CD14-positive monocyte (primary cell): ENCODE measurements at regions of chr15 and their contacts with region 1.

Region 1: DNA sequence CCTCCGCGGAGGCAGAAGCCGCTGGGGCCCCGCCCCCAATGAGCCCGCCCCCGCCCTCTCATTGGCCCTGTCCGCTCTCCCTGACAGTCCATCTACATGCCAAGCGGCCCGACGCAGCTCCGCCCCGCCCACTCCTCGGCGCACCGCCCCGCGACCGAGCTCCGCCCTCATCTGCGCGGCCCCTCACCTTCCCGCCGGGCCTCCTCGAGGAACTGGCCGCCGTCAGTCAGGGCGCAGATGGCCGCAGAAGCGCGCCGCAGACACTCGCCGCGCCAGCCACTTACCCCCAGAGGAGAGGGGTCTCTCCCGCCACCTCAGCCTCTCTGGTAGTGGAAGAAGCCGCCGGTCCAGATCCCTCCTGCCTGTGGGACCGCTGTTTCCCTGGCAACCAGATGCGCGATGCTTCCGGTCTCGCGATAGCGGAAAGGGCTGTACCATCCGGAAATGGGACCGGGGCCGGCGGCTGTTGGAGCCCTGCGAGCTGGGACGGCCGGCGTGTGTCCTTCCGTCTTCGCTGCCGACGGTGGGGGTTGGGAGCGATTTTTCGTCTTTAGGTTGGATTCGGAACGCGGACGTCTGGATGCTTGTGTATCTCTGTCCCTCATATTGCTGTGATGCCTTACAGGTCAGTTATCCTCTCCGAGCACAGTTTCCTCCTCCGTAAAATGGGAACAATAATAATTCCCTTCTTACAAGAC is at the start of gene FSIP1:
- DNase-seq: peak; percentile 94 to 95 (median 95)
- H3K4me3 ChIP-seq: peak within 1 kb of the TSS; percentile 81 to 91 (median 89)
- H3K4me3 Mint-ChIP-seq: peak within 1 kb of the TSS; percentile 94
- H3K27ac ChIP-seq: peak within 1 kb of the TSS; percentile 45 to 83
- H3K27ac Mint-ChIP-seq: peak within 1 kb of the TSS; percentile 87 to 96 (median 92)
- H3K4me1 ChIP-seq: peaks cover 17 to 20% of the 10 kb centered on the region in 2 donors
- H3K4me1 Mint-ChIP-seq: peaks cover 27% of the 10 kb centered on the region
- H3K27me3 ChIP-seq: no peaks in the 10 kb centered on the region
- H3K27me3 Mint-ChIP-seq: no peaks in the 10 kb centered on the region
- CTCF ChIP-seq: no peak
- polyA plus RNA-seq, gene FSIP1: 0.10 to 0.48 (median 0.21) TPM

Region 2: DNA sequence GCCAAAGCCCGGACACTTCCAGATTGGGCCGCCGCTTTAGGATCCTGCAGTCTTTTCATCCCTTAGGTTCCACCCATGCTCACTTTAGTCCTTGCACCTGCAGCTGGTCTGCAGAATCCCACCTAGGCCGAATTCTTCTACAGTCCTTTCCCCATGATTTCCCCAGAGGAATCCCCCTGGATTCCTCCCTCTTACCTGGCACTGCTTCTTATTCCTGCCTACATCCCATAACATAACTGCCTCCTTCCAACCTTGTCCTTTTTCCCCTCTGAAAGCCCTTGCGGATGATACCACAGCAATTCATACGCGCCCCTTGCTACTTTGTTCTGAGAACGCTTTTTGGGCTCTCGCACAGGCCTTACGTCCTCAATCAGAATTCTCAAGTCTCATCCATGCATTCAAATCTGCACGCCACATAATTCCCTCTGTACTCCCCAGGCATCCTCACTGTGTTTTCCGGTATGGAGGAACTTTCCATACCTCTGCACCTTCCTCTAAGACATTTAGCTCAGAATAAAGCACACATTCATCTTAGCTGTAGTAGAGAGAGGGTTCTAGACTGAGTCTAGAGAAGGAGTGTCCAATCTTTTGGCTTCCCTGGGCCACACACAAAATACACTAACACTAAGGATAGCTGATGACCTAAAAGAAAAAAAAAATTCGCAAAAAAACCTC is 151.9 kb after region 1 on chr15:
- intact Hi-C with region 1: loop called (anchors 5 to 10 kb)
- DNase-seq: no peak
- H3K4me3 ChIP-seq: peak overlapping the region; percentile 76 to 94 (median 77)
- H3K4me3 Mint-ChIP-seq: peak overlapping the region; percentile 89 to 94
- H3K27ac ChIP-seq: peak overlapping the region; percentile 40 to 88
- H3K27ac Mint-ChIP-seq: peak overlapping the region; percentile 68 to 91 (median 83)
- H3K4me1 ChIP-seq: peaks cover 26 to 27% of the 10 kb centered on the region in 2 donors
- H3K4me1 Mint-ChIP-seq: peaks cover 44% of the 10 kb centered on the region
- H3K27me3 ChIP-seq: no peaks in the 10 kb centered on the region
- H3K27me3 Mint-ChIP-seq: peaks cover 0 to 2% (median 0%) of the 10 kb centered on the region in 3 donors
- CTCF ChIP-seq: no peak

Region 3: DNA sequence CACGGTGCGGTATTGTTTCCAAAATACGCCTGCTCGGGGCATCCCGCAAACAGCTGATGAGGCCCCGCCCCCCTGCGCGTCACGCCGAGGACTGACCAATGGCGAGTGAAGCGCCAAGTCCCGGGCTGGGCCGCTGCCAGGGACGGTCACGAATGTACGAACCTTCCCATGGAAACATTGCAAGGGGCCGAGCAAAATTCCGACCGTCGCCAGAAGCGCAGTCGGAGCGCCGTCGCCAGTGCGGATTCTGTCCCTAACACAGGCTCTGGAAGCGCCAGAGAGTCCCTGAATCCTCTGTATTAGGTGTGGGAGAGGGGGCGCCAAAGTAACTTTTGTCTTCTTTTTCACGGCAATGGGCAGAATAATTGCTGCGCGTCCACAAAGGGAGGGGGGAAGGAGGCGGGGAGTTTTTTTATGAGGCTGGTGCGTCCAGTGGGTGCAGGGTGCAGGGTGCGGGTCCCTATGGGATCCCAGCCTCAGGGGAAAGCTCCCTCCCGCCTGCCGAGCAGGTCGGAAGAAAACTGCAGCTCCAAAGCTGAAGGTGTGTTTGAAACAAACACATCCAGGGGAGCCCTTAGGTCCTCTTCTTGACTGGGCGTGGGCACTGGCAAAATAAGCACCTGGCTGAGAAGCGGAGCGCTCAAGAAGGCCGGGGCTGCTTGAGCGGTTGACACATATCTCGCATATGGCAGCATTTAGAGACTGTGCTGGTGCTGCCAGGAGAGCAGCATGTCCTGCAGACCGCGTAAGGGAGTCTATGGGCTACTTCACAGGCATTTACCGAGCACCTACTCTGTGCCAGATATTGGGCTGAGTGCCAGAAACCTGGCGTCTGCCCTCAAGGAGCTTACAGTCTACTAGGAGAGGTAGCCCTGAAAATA is 326.5 kb after region 1 on chr15 and contains the start of gene BMF:
- intact Hi-C with region 1: loop called in 1 of 2 experiments (anchors 10 kb)
- DNase-seq: peak; percentile 96 to 98 (median 97)
- H3K4me3 ChIP-seq: peak within 1 kb of the TSS; percentile 91 to 93 (median 92)
- H3K4me3 Mint-ChIP-seq: peak within 1 kb of the TSS; percentile 89 to 95
- H3K27ac ChIP-seq: peak within 1 kb of the TSS; percentile 95 to 97
- H3K27ac Mint-ChIP-seq: peak within 1 kb of the TSS; percentile 94 to 99 (median 97)
- H3K4me1 ChIP-seq: peaks cover 47 to 51% of the 10 kb centered on the region in 2 donors
- H3K4me1 Mint-ChIP-seq: peaks cover 48% of the 10 kb centered on the region
- H3K27me3 ChIP-seq: no peaks in the 10 kb centered on the region
- H3K27me3 Mint-ChIP-seq: peaks cover 0 to 3% (median 1%) of the 10 kb centered on the region in 3 donors
- CTCF ChIP-seq: no peak
- polyA plus RNA-seq, gene BMF: 5.6 to 59.6 (median 6.5) TPM

Region 4: DNA sequence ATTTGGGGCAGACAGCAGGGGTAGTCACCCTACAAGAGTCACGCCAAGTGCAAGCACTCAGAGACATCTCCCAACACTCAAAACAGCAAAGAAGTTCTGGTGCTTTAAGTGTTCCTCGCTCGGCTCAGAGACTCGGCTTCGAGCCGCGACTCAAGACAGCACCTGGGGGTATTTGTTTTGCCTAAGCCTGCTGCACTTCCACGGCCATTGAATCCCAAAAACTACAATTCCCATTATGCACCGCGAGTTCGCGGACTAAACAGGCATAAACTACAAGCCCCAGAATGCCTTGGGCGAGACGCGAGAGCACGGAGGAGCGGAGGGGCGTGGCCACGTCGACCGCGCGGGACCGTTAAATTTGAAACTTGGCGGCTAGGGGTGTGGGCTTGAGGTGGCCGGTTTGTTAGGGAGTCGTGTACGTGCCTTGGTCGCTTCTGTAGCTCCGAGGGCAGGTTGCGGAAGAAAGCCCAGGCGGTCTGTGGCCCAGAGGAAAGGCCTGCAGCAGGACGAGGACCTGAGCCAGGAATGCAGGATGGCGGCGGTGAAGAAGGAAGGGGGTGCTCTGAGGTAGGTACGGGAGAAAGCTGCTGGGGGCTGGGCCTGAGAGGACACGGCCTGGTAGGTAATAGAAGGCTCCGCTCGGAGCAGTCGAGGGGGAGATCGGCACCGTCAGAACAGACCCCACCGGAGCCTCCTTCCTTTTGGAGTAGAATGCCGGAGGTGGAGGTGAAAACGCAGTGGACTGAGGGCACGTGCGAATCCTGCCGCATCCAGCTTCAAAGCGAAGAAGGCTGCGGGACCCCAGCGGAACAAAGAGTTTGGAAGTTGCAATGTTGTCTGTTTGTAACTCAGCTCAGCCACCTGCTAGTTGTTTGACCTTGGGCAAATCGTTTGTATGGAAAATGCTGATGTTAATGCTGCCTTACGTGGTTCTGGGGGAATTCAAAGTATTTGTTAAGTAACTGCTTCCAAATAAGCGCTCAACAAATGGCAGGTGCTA is 378.4 kb after region 1 on chr15 and contains the start of gene BUB1B:
- intact Hi-C with region 1: loop called in 1 of 2 experiments (anchors 10 kb)
- DNase-seq: peak; percentile 85 to 91 (median 87)
- H3K4me3 ChIP-seq: peak within 1 kb of the TSS; percentile 81 to 88 (median 87)
- H3K4me3 Mint-ChIP-seq: no peak within 1 kb of the TSS
- H3K27ac ChIP-seq: peak within 1 kb of the TSS in 1 of 2 donors; percentile 59
- H3K27ac Mint-ChIP-seq: no peak within 1 kb of the TSS
- H3K4me1 ChIP-seq: peaks cover 21 to 25% of the 10 kb centered on the region in 2 donors
- H3K4me1 Mint-ChIP-seq: peaks cover 8% of the 10 kb centered on the region
- H3K27me3 ChIP-seq: no peaks in the 10 kb centered on the region
- H3K27me3 Mint-ChIP-seq: peaks cover 0 to 7% (median 0%) of the 10 kb centered on the region in 3 donors
- CTCF ChIP-seq: no peak
- polyA plus RNA-seq, gene BUB1B: 0.01 to 0.51 TPM in 2 of 3 donors, not detected in the other